Ascending aorta (tissue), 2 donors: ENCODE measurements at regions of chr19 and their contacts with region 1.

Region 1: DNA sequence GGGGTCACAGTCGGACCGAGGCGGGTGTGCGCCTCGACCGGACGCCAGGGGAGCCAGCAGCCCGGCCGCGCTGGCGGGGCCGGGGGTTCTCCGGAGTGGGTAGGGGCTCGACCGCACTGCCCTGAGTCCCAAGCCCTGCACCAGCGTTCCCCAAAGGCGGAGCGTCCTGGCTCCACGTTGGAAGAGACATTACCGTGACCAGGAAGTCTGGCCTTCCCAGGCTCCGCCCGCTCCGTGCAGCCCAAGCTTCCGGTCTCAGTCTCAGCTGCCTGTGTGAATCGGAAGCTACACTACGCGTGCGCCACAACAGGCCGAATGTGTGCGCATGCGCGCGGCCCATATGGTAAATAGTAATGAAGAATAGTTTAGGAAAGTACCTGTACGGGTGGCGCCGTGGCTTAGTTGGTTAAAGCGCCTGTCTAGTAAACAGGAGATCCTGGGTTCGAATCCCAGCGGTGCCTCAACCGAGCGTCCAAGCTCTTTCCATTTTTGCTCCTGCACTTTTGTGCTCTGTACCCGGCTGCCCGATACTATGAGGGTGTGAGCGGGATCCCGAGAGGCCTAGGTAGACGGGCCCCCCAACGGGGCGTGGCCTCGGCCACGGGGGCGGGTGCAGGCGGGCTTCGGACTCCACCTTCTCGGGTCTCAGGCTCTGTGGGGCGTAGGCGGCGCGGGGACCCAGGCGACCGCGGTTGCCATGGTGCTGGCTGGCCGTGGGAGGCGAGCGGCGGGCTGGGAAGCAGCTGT is 17.3 kb upstream of the LRP3 start:
- DNase-seq: peak; percentile 93 to 99
- H3K4me3 ChIP-seq: peak overlapping the region; percentile 65 to 76
- H3K27ac ChIP-seq: peak overlapping the region; percentile 91 to 95
- H3K4me1 ChIP-seq: peaks cover 7 to 8% of the 10 kb centered on the region in 2 donors
- H3K27me3 ChIP-seq: no peaks in the 10 kb centered on the region
- CTCF ChIP-seq: no peak

Region 2: GRCh38 chr19:32405431-32406161 is 771.2 kb before region 1 on chr19 and contains the start of gene DPY19L3:
- intact Hi-C with region 1: loop called (anchors 2 kb)
- DNase-seq: peak; percentile 81 to 97
- H3K4me3 ChIP-seq: peak within 1 kb of the TSS; percentile 93 to 94
- H3K27ac ChIP-seq: peak within 1 kb of the TSS; percentile 99 to 100
- H3K4me1 ChIP-seq: peaks cover 0 to 14% of the 10 kb centered on the region in 2 donors
- H3K27me3 ChIP-seq: no peaks in the 10 kb centered on the region
- CTCF ChIP-seq: no peak
- total RNA-seq, gene DPY19L3: 115 TPM

Region 3: GRCh38 chr19:32674959-32675719 is 501.7 kb before region 1 on chr19 and contains the start of gene ANKRD27:
- intact Hi-C with region 1: loop called (anchors 5 kb)
- DNase-seq: peak; percentile 94 to 99
- H3K4me3 ChIP-seq: peak within 1 kb of the TSS; percentile 93 to 98
- H3K27ac ChIP-seq: peak within 1 kb of the TSS; percentile 61 to 72
- H3K4me1 ChIP-seq: peaks cover 10 to 18% of the 10 kb centered on the region in 2 donors
- H3K27me3 ChIP-seq: peaks cover 10% of the 10 kb centered on the region
- CTCF ChIP-seq: no peak
- total RNA-seq, gene ANKRD27: 17.3 TPM

Region 4: DNA sequence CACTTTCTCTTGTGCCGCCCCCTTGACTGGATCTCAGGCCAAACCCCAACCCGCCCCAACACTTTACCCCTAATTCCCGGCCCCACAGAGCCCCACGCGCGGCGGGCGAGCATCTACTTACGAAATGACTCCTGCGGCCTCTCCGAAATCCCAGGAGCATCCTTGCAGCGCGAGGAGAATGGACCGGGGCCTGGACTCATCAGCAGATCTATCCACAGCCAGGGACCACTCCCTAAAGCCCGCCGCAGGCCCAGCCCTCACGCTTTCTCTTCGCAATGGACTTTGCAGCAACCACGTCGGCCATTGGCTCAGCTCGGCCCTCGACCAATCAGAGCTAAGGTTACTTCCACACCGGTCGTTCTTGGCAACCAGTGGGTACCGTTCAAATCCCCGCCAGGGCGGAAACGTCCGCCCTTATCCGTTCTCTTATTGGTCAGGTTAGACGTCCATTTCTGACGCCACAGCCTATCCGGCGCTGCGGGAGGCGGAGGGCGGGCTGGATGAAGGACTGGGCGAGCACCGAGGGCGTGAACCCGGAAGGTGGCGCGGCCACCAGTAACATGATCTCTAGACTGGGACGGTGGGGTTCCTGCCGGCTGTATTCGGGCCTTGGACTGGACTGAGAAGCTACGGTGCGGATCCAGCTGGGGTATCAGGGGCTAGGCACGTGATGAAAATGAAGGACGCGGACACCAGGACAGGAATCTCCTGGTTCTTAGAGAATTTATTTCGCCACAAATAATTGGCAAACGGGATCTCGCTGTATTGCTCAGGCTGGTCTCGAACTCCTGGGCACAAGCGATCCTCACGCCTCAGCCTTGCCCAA is 204.9 kb before region 1 on chr19 and contains the starts of genes CEP89 and FAAP24:
- intact Hi-C with region 1: loop called (anchors 5 kb)
- DNase-seq: peak; percentile 96 to 99
- H3K4me3 ChIP-seq: peak within 1 kb of the TSS; percentile 70 to 83
- H3K27ac ChIP-seq: peak within 1 kb of the TSS; percentile 63 to 74
- H3K4me1 ChIP-seq: peaks cover 0 to 9% of the 10 kb centered on the region in 2 donors
- H3K27me3 ChIP-seq: no peaks in the 10 kb centered on the region
- CTCF ChIP-seq: no peak
- total RNA-seq, gene CEP89: 7.1 TPM
- total RNA-seq, gene FAAP24: not detected

Region 5: GRCh38 chr19:33208904-33209849 is 32.3 kb after region 1 on chr19:
- intact Hi-C with region 1: no loop called
- DNase-seq: no peak
- H3K4me3 ChIP-seq: no peak overlapping the region
- H3K27ac ChIP-seq: no peak overlapping the region
- H3K4me1 ChIP-seq: no peaks in the 10 kb centered on the region
- H3K27me3 ChIP-seq: no peaks in the 10 kb centered on the region
- CTCF ChIP-seq: peak in 1 of 3 experiments; percentile 12

Region 6: GRCh38 chr19:33373701-33374421 is 197.0 kb after region 1 on chr19 and contains the start of gene CEBPG:
- intact Hi-C with region 1: loop called (anchors 2 kb)
- DNase-seq: no peak
- H3K4me3 ChIP-seq: peak within 1 kb of the TSS; percentile 87
- H3K27ac ChIP-seq: peak within 1 kb of the TSS; percentile 96 to 97
- H3K4me1 ChIP-seq: peaks cover 0 to 19% of the 10 kb centered on the region in 2 donors
- H3K27me3 ChIP-seq: no peaks in the 10 kb centered on the region
- CTCF ChIP-seq: peak in 1 of 3 experiments; percentile 28
- total RNA-seq, gene CEBPG: 21.9 TPM

Region 7: GRCh38 chr19:33795370-33796163 is 618.7 kb after region 1 on chr19:
- intact Hi-C with region 1: loop called (anchors 10 kb)
- DNase-seq: peak in 1 of 2 donors; percentile 88
- H3K4me3 ChIP-seq: peak overlapping the region; percentile 77 to 93
- H3K27ac ChIP-seq: peak overlapping the region; percentile 93 to 96
- H3K4me1 ChIP-seq: peaks cover 4 to 6% of the 10 kb centered on the region in 2 donors
- H3K27me3 ChIP-seq: no peaks in the 10 kb centered on the region
- CTCF ChIP-seq: peak; percentile 69 to 83 (median 77)